GM18951 (cell line): ENCODE measurements at regions of chr16 and their contacts with region 1.

Region 1: DNA sequence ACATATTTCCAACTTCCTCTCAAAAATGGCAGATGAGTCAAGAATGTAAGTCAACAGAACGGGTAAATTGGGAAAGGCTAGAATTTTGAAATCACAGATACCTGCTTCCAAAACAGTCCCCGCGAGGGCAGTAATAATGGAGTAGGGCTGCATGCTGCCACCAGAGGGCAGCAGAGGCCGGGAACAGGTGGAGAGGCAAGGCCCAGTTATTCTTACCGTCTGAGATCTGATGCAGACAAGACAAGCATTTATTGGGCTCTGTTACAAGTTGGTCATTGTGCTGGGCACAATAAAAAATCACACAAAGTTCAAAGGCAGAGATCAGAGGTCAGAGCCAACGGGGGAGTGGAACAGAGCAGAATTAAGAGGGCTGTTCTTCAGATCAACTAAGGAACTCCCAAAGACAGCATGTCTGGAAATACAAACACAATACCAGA is 8.8 kb upstream of the MLKL start:
- POLR2A ChIP-seq: no peak

Region 2: GRCh38 chr16:74438492-74439041 is 270.9 kb before region 1 on chr16:
- in situ Hi-C with region 1: no loop called
- POLR2A ChIP-seq: no peak

Region 3: DNA sequence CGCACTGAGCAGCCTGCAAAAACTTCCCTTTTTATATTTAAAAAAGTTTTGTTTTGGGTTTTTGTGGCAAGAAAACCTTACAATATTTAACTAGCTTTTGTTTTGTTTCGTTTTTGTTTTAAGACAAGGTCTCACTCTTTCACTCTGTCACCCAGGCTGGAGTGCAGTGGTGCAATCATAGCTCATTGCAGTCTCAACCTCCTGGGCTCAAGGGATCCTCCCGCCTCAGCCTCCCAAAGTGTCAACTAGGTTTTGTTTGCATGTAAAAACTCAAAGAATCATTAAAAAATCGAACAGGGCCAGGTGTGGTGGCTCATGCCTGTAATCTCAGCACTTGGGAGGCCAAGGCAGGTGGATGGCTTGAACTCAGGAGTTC is 143.0 kb after region 1 on chr16:
- in situ Hi-C with region 1: loop called (anchors 10 kb)
- POLR2A ChIP-seq: no peak